Naive thymus-derived CD4-positive, alpha-beta T cell (primary cell): ENCODE measurements at regions of chr14 and their contacts with region 1.

Region 1: DNA sequence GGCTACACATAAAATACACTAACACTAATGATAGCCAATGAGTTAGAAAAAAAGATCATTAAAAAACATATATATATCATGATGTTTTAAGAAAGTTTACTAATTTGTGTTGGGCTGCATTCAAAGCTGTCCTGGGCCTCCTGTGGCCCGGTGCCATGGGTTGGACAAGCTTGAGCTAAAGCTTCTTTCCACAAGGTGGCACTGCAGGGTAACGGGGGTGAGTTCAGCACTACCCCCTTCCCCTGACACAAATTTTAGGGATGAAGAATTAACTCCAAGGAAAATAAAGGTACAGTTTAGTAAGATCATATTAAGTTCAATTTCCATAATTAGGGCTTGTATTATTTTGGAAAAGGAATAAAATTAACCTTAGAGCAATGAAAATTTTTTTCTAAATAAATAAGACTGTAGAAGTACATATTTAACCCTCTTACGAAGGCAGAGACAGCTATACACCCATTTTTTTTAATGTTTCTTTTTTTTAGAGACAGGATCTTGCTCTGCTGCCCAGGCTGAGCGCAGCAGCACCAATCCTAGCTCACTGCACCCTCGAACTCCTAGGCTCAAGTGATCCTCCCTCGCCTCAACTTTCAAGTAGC is 38.9 kb downstream of the PPP1R13B start:
- DNase-seq: peak; percentile 20 to 71 (median 63)
- ATAC-seq: peak; percentile 82
- H3K4me3 ChIP-seq: no peak overlapping the region
- H3K4me3 Mint-ChIP-seq: no peak overlapping the region
- H3K27ac ChIP-seq: no peak overlapping the region
- H3K27ac Mint-ChIP-seq: no peak overlapping the region
- H3K4me1 ChIP-seq: no peaks in the 10 kb centered on the region
- H3K4me1 Mint-ChIP-seq: peaks cover 3 to 18% (median 6%) of the 10 kb centered on the region in 7 donors
- H3K27me3 ChIP-seq: no peaks in the 10 kb centered on the region
- H3K27me3 Mint-ChIP-seq: no peaks in the 10 kb centered on the region

Region 2: DNA sequence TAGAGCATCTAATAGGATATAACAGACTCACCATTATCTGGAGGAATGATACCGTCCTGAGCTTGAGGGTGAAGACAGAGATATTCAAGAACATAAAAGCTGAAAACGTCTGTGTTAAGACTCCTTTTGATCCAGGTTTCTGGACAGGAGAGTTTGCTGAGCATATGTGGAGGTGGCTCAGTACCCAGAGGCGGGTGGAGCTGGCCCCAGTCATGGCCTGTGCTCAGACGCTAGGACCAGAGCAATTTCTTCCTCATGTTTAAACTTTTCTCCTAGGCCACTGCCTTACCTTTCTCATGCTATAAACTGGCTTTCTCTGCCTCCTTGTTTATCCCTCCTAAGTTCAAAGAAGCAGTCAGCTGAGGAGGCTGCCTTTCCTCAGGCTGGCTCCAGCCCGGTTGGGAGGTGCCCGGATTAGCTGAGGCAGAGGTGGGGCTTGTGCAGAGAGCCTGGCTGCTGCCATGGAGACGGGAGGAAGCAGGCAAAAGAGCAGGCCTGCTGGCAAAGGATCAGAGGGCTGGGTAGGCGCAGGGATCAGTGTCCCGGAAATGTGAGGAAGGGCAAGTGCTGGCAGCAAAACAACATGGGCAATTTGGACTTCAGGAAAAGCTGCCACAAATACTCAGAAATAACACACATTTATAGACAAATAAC is 232.0 kb before region 1 on chr14:
- CTCF ChIA-PET with region 1: no interaction called
- POLR2A ChIA-PET with region 1: no interaction called
- intact Hi-C with region 1: loop called in 1 of 2 experiments (anchors 5 kb)
- DNase-seq: no peak
- ATAC-seq: no peak
- H3K4me3 ChIP-seq: no peak overlapping the region
- H3K4me3 Mint-ChIP-seq: no peak overlapping the region
- H3K27ac ChIP-seq: no peak overlapping the region
- H3K27ac Mint-ChIP-seq: no peak overlapping the region
- H3K4me1 ChIP-seq: no peaks in the 10 kb centered on the region
- H3K4me1 Mint-ChIP-seq: peaks cover 0 to 2% (median 0%) of the 10 kb centered on the region in 7 donors
- H3K27me3 ChIP-seq: no peaks in the 10 kb centered on the region
- H3K27me3 Mint-ChIP-seq: no peaks in the 10 kb centered on the region

Region 3: DNA sequence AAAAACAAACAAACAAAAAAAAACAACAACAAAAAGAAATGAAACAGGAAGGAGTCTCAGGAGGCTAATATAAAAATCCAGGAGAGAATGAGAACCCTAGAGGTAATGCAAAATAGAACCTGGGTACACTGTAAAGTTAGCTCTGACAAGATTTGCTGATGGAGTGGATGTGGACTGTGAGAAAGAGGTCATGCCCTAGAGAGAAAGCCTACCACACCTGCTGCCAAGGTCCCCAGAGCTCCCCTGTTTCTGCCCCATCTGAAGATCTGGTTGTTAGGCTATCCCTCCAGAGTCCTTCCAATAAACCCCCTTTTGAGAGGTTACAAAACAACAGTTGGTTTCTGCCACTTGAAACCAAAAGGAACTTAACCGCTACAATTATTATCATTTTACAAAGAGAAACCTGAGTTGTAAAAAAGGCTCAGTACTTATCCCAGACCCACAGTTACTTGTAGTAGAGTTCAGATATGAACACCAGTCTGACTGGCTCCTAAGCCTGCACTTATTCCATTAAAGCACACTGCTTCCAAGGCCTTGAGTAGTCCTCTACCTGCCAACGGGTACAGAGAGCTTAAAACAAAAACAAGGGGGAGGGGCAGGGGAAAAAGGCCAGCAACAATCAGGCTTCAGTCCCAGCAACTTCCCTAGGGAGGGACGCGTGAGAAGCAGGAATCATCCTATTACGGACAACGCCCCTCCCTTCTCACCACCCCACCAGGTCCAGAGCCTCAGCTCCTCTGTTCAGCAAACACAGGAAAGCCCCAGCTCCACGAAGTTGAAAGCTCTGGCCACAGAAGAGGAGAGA is 11.2 kb after region 1 on chr14:
- CTCF ChIA-PET with region 1: interaction called, 16 read pairs
- POLR2A ChIA-PET with region 1: no interaction called
- intact Hi-C with region 1: no loop called
- DNase-seq: no peak
- ATAC-seq: no peak
- H3K4me3 ChIP-seq: no peak overlapping the region
- H3K4me3 Mint-ChIP-seq: peak overlapping the region in 6 of 10 donors; percentile 9 to 74 (median 46)
- H3K27ac ChIP-seq: no peak overlapping the region
- H3K27ac Mint-ChIP-seq: peak overlapping the region in 8 of 9 donors; percentile 24 to 76 (median 57)
- H3K4me1 ChIP-seq: peaks cover 0 to 18% of the 10 kb centered on the region in 2 donors
- H3K4me1 Mint-ChIP-seq: peaks cover 0 to 52% (median 48%) of the 10 kb centered on the region in 7 donors
- H3K27me3 ChIP-seq: no peaks in the 10 kb centered on the region
- H3K27me3 Mint-ChIP-seq: peaks cover 0 to 7% (median 0%) of the 10 kb centered on the region in 5 donors

Region 4: DNA sequence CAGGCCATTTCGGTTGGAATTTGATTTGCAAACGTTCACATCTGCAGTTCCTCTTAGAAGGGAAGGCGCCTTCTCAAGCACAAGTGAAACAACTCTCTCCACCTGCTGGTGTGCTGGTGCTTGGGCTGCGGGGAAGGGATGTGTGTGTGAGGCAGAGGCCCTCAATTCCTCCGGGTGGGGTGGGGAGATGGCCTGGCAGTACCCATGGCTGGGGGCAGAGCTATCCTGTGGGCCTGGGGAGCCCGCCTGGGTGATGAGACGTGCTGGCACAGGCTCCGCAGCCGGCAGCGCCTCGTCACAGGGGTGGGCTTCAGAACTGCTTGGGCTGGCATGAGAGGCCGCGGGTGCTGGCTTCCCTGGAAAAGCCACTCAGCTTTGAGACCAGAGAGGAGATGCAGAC is 90.8 kb after region 1 on chr14:
- CTCF ChIA-PET with region 1: interaction called, 10 read pairs
- POLR2A ChIA-PET with region 1: no interaction called
- intact Hi-C with region 1: no loop called
- DNase-seq: no peak
- ATAC-seq: no peak
- H3K4me3 ChIP-seq: no peak overlapping the region
- H3K4me3 Mint-ChIP-seq: no peak overlapping the region
- H3K27ac ChIP-seq: no peak overlapping the region
- H3K27ac Mint-ChIP-seq: no peak overlapping the region
- H3K4me1 ChIP-seq: peaks cover 0 to 5% of the 10 kb centered on the region in 2 donors
- H3K4me1 Mint-ChIP-seq: peaks cover 0 to 7% (median 6%) of the 10 kb centered on the region in 7 donors
- H3K27me3 ChIP-seq: no peaks in the 10 kb centered on the region
- H3K27me3 Mint-ChIP-seq: peaks cover 0 to 1% (median 0%) of the 10 kb centered on the region in 5 donors

Region 5: GRCh38 chr14:103984196-103984595 is 175.7 kb after region 1 on chr14:
- CTCF ChIA-PET with region 1: interaction called, 7 read pairs
- POLR2A ChIA-PET with region 1: no interaction called
- intact Hi-C with region 1: loop called in 1 of 2 experiments (anchors 1 kb)
- DNase-seq: no peak
- ATAC-seq: no peak
- H3K4me3 ChIP-seq: no peak overlapping the region
- H3K4me3 Mint-ChIP-seq: no peak overlapping the region
- H3K27ac ChIP-seq: no peak overlapping the region
- H3K27ac Mint-ChIP-seq: no peak overlapping the region
- H3K4me1 ChIP-seq: no peaks in the 10 kb centered on the region
- H3K4me1 Mint-ChIP-seq: peaks cover 0 to 2% (median 0%) of the 10 kb centered on the region in 7 donors
- H3K27me3 ChIP-seq: no peaks in the 10 kb centered on the region
- H3K27me3 Mint-ChIP-seq: peaks cover 7 to 24% (median 19%) of the 10 kb centered on the region in 5 donors